Astrocyte of the cerebellum (primary cell): ENCODE measurements at regions of chr4 and their contacts with region 1.

Region 1: GRCh38 chr4:158624889-158625478 is 46.7 kb downstream of the C4orf46 start:
- DNase-seq: peak; percentile 64
- H3K4me3 ChIP-seq: no peak overlapping the region
- CTCF ChIP-seq: peak; percentile 76

Region 2: GRCh38 chr4:158255727-158256324 is 369.2 kb before region 1 on chr4:
- in situ Hi-C with region 1: loop called (anchors 5 kb)
- DNase-seq: peak; percentile 50
- H3K4me3 ChIP-seq: no peak overlapping the region
- CTCF ChIP-seq: peak; percentile 68

Region 3: GRCh38 chr4:158542991-158543590 is 81.9 kb before region 1 on chr4:
- in situ Hi-C with region 1: no loop called
- DNase-seq: no peak
- H3K4me3 ChIP-seq: no peak overlapping the region
- CTCF ChIP-seq: no peak